ENCODE measurements at regions of chr15 and their contacts with region 1.

Region 1: DNA sequence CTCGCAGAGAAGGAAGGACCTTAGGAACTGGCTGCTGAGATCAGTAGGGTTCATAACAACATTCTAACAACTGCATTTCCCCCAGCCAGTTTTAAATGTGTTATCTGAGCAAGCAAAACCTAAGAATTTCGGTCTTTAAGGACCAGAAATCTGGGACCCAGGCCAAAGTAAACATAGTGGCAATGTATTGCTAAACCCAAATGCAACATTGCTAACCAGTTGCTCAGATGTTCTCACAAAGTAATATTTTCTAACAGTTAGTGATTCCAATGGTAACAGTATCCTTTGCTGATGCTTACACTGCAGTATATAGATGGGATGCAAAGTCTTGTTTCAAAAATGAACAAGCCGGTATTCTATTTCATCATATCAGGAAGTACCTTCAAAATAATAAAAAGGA is 254.3 kb downstream of the RYR3 start:
- DNase-seq: no peak
- H3K4me3 ChIP-seq: no peak overlapping the region
- H3K27ac ChIP-seq: no peak overlapping the region
- H3K4me1 ChIP-seq: no peaks in the 10 kb centered on the region
- H3K27me3 ChIP-seq: no peaks in the 10 kb centered on the region
- CTCF ChIP-seq: no peak
- EP300 ChIP-seq: no peak
- POLR2A ChIP-seq: no peak

Region 2: DNA sequence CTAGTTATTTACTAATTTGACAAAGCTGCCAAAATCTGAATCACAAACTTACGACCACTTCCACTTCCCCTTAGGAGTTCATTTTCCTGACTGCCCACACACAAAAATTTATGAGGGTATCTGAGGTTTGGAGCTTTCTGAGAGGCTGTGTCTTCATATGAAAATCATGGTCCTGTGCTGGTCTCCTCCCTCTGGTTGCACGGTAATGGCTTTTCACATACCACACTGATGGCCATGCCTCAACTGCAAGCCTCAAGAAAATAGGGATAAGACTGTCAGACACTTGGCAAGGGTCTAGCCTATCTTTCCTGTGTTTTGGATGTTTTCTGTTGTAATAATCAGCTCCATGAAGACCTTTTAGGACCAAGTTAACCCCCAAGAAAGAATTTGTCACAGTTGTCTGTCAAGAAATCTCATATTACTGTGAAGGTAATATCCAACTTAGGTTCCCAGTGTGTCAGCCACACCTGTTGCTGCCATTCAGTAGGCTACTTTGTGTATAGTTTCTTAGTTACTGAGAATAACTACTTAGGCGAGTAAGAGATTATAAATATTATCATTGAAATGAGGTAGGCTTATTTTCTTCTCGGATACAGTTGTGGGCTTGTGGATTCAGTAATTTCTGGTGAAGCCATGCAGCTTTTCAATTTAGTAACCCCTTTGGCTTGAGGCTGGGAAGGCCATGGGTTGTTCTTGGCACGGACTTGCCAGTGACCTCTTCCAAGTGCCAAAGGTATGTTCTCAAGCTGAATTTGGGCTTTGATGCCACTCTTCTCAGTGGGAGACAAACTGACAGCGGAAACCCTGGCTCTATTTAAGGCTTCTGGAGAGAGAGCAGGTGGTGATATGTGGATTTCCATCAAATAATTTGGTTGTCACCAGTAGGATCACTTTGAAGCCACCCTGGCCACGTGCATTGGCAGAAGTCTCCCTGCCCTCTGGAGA is 153.2 kb before region 1 on chr15:
- intact Hi-C with region 1: no loop called
- DNase-seq: no peak
- H3K4me3 ChIP-seq: no peak overlapping the region
- H3K27ac ChIP-seq: no peak overlapping the region
- H3K4me1 ChIP-seq: no peaks in the 10 kb centered on the region
- H3K27me3 ChIP-seq: no peaks in the 10 kb centered on the region
- CTCF ChIP-seq: no peak
- EP300 ChIP-seq: no peak
- POLR2A ChIP-seq: no peak

Region 3: GRCh38 chr15:33500432-33501195 is 64.5 kb before region 1 on chr15:
- intact Hi-C with region 1: loop called in 1 of 4 experiments (anchors 2 kb)
- DNase-seq: no peak
- H3K4me3 ChIP-seq: no peak overlapping the region
- H3K27ac ChIP-seq: no peak overlapping the region
- H3K4me1 ChIP-seq: no peaks in the 10 kb centered on the region
- H3K27me3 ChIP-seq: no peaks in the 10 kb centered on the region
- CTCF ChIP-seq: no peak
- EP300 ChIP-seq: no peak
- POLR2A ChIP-seq: no peak

Region 4: DNA sequence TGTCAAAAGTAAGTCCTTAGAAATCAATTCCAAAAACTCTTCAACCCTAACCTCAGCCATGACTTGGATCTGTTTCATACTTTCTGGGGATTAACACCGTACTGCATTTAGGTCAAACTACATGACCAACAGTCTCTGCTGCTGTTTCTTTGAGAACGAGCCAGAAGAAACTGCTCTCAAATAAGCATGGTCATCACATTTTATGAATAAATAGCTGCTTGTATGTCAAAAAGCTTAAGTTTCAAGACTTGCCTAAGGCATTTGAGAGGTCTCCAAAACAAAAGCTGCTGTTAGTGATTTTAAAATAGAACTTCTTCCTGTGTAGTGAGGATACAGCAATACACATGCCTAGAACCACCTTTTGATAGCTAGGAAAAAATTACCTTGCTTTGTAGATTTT is 236.9 kb after region 1 on chr15:
- intact Hi-C with region 1: no loop called
- DNase-seq: no peak
- H3K4me3 ChIP-seq: no peak overlapping the region
- H3K27ac ChIP-seq: no peak overlapping the region
- H3K4me1 ChIP-seq: no peaks in the 10 kb centered on the region
- H3K27me3 ChIP-seq: no peaks in the 10 kb centered on the region
- CTCF ChIP-seq: no peak
- EP300 ChIP-seq: no peak
- POLR2A ChIP-seq: no peak

Measured in ovary (tissue), 10 donors.